ENCODE measurements at regions of chr17 and their contacts with region 1.

Region 1: GRCh38 chr17:60571551-60571950 is 28.4 kb upstream of the PPM1D start:
- DNase-seq: no peak
- ATAC-seq: 0 out of 6 replicates have a peak, but pooled peaks of 1 of the 2 experiments have one; percentile 49
- H3K4me3 ChIP-seq: no peak overlapping the region
- H3K27ac ChIP-seq: no peak overlapping the region
- H3K4me1 ChIP-seq: no peaks in the 10 kb centered on the region
- CTCF ChIP-seq: no peak
- EP300 ChIP-seq: no peak
- POLR2A ChIP-seq: no peak
- RAD21 ChIP-seq: no peak

Region 2: GRCh38 chr17:60545465-60546454 is 25.8 kb before region 1 on chr17:
- CTCF ChIA-PET with region 1: interaction called, 14 read pairs
- POLR2A ChIA-PET with region 1: no interaction called
- DNase-seq: no peak
- ATAC-seq: peak in 1 of 2 experiments; percentile 56; a peak in 1 of 6 replicates
- H3K4me3 ChIP-seq: no peak overlapping the region
- H3K27ac ChIP-seq: no peak overlapping the region
- H3K4me1 ChIP-seq: no peaks in the 10 kb centered on the region
- CTCF ChIP-seq: no peak
- EP300 ChIP-seq: no peak
- POLR2A ChIP-seq: no peak
- RAD21 ChIP-seq: no peak

Region 3: GRCh38 chr17:61426013-61426730 is 854.6 kb after region 1 on chr17:
- CTCF ChIA-PET with region 1: no interaction called
- POLR2A ChIA-PET with region 1: no interaction called
- DNase-seq: peak in 1 of 2 experiments; percentile 69
- ATAC-seq: peak; percentile 55 to 78; a peak in 5 of 6 replicates
- H3K4me3 ChIP-seq: no peak overlapping the region
- H3K27ac ChIP-seq: peak overlapping the region; percentile 63 to 69
- H3K4me1 ChIP-seq: peaks cover 25% of the 10 kb centered on the region
- CTCF ChIP-seq: peak; percentile 41; the same call in 2 of the 3 replicates
- EP300 ChIP-seq: no peak
- POLR2A ChIP-seq: no peak
- RAD21 ChIP-seq: peak; percentile 45 to 79; a peak in 4 of 5 replicates

Measured in A549 (cell line).